Transverse colon (tissue), 4 donors: ENCODE measurements at regions of chr1 and their contacts with region 1.

Region 1: DNA sequence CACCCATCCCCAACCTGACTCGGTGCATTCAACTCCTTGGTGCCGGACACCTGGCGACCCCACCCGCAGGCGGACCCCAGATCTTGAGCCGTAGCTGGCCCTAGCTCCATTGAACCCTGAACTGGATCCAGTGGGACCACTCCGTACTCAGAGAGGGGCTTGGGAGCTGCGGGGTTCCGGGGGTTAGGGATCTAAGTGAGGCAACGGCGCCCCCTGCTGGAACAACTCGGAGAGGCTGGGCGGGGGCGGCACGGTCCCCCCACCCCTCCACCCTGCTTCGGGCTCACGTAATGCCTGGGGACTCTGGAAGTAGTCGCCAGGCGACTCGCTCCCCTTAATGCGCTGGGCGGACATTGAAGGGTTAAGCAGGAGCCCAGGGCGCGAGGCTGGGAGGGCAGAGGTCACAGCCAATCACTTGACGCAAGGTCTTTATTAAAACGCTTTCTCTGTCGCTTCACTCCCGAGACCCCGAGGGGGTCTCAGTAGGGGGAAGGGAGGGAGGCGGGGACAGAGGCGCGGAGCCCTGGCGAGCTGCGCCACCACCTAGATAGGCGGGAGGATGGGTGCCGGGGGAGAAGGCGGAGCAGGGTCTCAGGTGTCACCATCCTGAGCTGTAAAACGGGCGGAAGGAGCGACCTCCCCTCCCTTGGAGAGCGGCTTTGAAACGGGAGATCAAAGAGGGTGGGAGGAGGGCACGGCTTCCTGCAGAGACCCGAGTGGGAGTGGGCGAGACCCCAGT is 704 bp upstream of the CRABP2 start:
- DNase-seq: peak; percentile 66
- H3K4me3 ChIP-seq: peak overlapping the region; percentile 12 to 54 (median 29)
- H3K27ac ChIP-seq: peak overlapping the region; percentile 67 to 75 (median 72)
- H3K4me1 ChIP-seq: peaks cover 31 to 55% (median 38%) of the 10 kb centered on the region in 4 donors
- H3K27me3 ChIP-seq: peaks cover 43% of the 10 kb centered on the region
- CTCF ChIP-seq: peak; percentile 74 to 81 (median 80)
- EP300 ChIP-seq: no peak
- POLR2A ChIP-seq: no peak

Region 2: GRCh38 chr1:156860113-156860627 is 154.1 kb after region 1 on chr1:
- in situ Hi-C with region 1: loop called in 1 of 4 experiments (anchors 10 kb)
- intact Hi-C with region 1: no loop called
- DNase-seq: peak; percentile 30
- H3K4me3 ChIP-seq: peak overlapping the region in 3 of 4 donors; percentile 11 to 37 (median 15)
- H3K27ac ChIP-seq: no peak overlapping the region
- H3K4me1 ChIP-seq: peaks cover 14 to 27% (median 25%) of the 10 kb centered on the region in 4 donors
- H3K27me3 ChIP-seq: peaks cover 85% of the 10 kb centered on the region
- CTCF ChIP-seq: peak; percentile 65 to 77 (median 68)
- EP300 ChIP-seq: no peak
- POLR2A ChIP-seq: no peak